Endothelial cell of umbilical vein (primary cell): ENCODE measurements at regions of chr7 and their contacts with region 1.

Region 1: GRCh38 chr7:29105752-29106668 is 40.3 kb downstream of the CPVL start:
- DNase-seq: peak; percentile 66
- H3K4me3 ChIP-seq: no peak overlapping the region
- H3K27ac ChIP-seq: no peak overlapping the region
- H3K4me1 ChIP-seq: no peaks in the 10 kb centered on the region
- H3K27me3 ChIP-seq: peaks cover 8 to 13% of the 10 kb centered on the region in 2 experiments
- CTCF ChIP-seq: peak; percentile 69 to 75
- POLR2A ChIP-seq: no peak

Region 2: DNA sequence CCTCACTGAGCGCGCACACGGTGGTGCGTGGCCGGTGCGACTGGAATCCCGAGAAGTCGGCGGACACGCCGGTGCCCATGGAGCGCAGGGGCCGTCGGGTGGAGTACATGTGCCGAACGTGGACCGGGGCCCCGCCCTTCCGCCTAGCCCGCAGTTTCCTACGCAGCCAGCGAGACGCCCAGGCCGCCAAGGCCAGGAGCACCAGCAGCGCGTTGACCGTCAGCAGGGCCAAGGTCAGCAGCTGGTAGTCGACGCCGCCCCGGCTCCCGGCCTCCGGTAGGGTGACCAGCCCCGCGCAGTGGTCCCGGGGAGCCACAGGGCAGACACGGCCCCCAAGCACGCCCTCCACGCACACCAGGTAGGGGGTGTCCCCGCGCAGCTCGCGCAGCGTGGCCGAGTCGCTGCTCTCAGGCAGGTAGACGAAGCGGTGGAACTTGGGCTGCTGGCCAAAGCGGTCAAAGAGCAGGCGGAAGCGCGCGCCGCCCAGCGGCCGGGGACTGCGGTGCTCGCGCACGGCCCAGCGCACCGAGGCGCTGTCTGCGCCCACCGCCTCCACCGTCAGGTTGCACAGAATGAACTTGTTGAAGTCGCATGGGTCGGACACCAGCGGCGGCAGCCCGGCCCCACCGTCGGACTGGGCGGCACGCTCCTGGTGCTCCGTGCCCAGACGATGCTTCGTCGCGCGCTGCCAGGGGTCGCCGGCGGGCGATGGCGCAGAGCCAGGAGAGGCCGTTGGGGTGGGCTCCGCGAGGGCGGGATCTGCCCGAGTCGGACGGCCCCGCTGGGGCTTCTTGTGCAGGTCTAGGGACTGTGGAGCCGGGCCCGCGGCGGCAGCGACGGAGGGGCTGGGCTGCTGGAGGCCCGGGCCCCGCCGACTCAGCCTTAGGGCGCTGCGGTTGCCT is 150.0 kb before region 1 on chr7:
- CTCF ChIA-PET with region 1: interaction called, 161 read pairs
- POLR2A ChIA-PET with region 1: no interaction called
- dilution Hi-C with region 1: no loop called
- intact Hi-C with region 1: loop called (anchors 1 kb)
- DNase-seq: peak; percentile 57
- H3K4me3 ChIP-seq: peak overlapping the region in 2 of 3 experiments; percentile 13 to 16
- H3K27ac ChIP-seq: no peak overlapping the region
- H3K4me1 ChIP-seq: peaks cover 11% of the 10 kb centered on the region
- H3K27me3 ChIP-seq: peaks cover 18 to 26% of the 10 kb centered on the region in 2 experiments
- CTCF ChIP-seq: peak; percentile 77 to 86
- POLR2A ChIP-seq: no peak

Region 3: GRCh38 chr7:29035044-29035740 is 70.8 kb before region 1 on chr7:
- CTCF ChIA-PET with region 1: interaction called, 11 read pairs
- POLR2A ChIA-PET with region 1: no interaction called
- dilution Hi-C with region 1: no loop called
- intact Hi-C with region 1: loop called (anchors 1 kb)
- DNase-seq: peak; percentile 91
- H3K4me3 ChIP-seq: no peak overlapping the region
- H3K27ac ChIP-seq: peak overlapping the region; percentile 72
- H3K4me1 ChIP-seq: peaks cover 63% of the 10 kb centered on the region
- H3K27me3 ChIP-seq: no peaks in the 10 kb centered on the region
- CTCF ChIP-seq: no peak
- POLR2A ChIP-seq: peak; percentile 40

Region 4: GRCh38 chr7:29119538-29120199 is 13.7 kb after region 1 on chr7:
- CTCF ChIA-PET with region 1: interaction called, 42 read pairs
- POLR2A ChIA-PET with region 1: no interaction called
- dilution Hi-C with region 1: no loop called
- intact Hi-C with region 1: no loop called
- DNase-seq: no peak
- H3K4me3 ChIP-seq: no peak overlapping the region
- H3K27ac ChIP-seq: no peak overlapping the region
- H3K4me1 ChIP-seq: peaks cover 9% of the 10 kb centered on the region
- H3K27me3 ChIP-seq: no peaks in the 10 kb centered on the region
- CTCF ChIP-seq: no peak
- POLR2A ChIP-seq: no peak